MCF 10A (cell line): ENCODE measurements at regions of chr2 and their contacts with region 1.

Region 1: DNA sequence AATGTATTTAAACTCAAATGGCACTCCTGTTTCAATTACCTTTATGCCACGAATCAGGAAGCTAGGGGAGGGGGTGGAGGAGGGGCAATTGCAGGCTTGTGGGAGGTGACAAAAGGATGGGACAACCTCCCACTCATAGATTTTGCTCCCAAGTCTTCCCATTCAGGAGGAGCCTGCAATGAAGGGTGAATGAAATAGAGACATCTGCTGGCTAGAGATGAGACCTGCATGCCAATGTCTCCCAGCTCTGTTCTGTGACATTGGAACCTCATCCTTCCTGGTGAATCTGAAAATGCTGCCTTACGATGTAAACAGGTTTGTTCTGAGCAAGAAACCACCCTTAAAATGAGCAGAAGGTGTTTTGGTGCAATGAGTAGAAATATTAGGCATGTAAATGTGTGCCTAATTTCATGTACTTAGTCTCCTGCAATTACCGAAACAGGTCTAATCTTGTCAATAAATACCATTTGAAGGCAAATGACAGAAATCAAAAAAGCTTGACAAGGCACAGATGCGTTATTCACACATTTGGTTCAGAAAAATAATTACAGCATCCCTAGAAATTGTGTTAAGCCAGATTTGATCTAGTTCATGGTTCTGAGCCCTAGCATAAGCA is 2.7 kb upstream of the PID1 start:
- DNase-seq: peak; percentile 94
- H3K4me3 Mint-ChIP-seq: peak overlapping the region; percentile 57
- H3K27ac Mint-ChIP-seq: peak overlapping the region; percentile 41
- H3K4me1 Mint-ChIP-seq: peaks cover 40% of the 10 kb centered on the region
- H3K27me3 Mint-ChIP-seq: no peaks in the 10 kb centered on the region
- CTCF ChIP-seq: peak; percentile 66

Region 2: DNA sequence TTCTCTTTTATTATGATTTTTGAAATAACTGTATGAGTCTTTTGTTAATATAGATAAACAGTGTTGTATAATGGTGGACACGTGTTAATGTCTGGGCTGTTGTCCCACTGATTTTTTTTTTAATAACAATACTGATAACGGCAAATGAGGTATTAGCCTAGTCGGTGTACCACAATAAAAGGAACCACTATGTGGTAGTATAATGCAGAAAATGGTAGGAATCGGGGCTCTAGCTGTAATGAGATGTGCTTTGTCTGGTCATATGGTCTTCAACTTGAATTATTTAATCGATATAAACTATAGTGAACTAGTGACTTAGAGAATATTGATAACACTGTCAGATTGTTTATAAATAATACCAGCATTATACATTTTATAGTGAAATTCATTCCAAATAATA is 574.4 kb before region 1 on chr2:
- CTCF ChIA-PET with region 1: interaction called, 3 read pairs
- POLR2A ChIA-PET with region 1: no interaction called
- intact Hi-C with region 1: loop called (anchors 1 kb)
- DNase-seq: peak; percentile 59
- H3K4me3 Mint-ChIP-seq: no peak overlapping the region
- H3K27ac Mint-ChIP-seq: no peak overlapping the region
- H3K4me1 Mint-ChIP-seq: peaks cover 10% of the 10 kb centered on the region
- H3K27me3 Mint-ChIP-seq: no peaks in the 10 kb centered on the region
- CTCF ChIP-seq: peak; percentile 51

Region 3: DNA sequence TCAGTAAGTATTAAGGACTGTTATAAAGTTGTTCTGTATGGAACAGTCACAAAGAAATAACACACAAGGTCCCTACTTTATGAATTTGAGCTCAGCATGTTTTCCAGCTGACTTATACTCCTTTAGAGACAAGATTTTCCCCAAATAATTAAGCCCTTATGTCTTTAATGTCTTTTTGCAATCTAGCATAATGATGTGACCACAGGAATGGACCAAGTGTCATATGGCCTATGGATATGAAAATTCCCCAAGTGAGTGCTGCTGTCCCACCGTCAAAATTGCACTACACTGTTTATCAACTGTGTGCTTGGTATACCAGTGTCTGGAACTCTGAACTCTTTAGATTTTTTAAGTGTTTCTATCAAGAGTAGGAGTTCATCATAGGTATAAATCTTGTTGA is 372.3 kb before region 1 on chr2:
- CTCF ChIA-PET with region 1: no interaction called
- POLR2A ChIA-PET with region 1: no interaction called
- intact Hi-C with region 1: no loop called
- DNase-seq: no peak
- H3K4me3 Mint-ChIP-seq: no peak overlapping the region
- H3K27ac Mint-ChIP-seq: no peak overlapping the region
- H3K4me1 Mint-ChIP-seq: no peaks in the 10 kb centered on the region
- H3K27me3 Mint-ChIP-seq: no peaks in the 10 kb centered on the region
- CTCF ChIP-seq: no peak

Region 4: DNA sequence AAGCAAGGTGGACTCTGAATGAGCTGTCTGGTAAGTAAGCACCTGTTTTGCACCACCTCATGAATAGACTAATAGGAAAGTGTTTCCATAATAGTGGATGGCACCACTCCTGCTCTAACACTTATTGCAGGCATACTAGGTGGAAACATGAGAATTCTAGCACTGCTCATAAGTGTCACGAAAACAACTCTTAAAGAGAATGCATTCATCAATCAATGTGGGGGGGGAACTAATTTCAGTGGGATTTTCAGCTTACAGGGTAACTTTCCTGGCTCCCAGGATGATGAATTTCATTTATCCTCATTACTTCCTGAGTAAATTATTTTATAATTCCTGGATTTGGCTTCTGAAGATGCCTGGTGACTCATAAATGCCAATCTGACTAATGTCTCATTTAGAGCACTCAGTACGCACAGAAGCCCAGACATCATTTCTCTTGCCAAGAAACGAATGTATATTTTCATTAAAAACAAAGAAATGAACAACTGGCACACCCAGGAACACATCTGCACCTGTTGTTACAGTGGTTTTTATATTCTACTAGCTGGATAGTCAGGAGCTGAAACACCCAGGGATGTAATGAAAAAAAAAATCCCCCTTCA is 132.3 kb before region 1 on chr2:
- CTCF ChIA-PET with region 1: interaction called, 248 read pairs
- POLR2A ChIA-PET with region 1: interaction called, 18 read pairs
- intact Hi-C with region 1: no loop called
- DNase-seq: peak; percentile 86
- H3K4me3 Mint-ChIP-seq: no peak overlapping the region
- H3K27ac Mint-ChIP-seq: peak overlapping the region; percentile 49
- H3K4me1 Mint-ChIP-seq: peaks cover 30% of the 10 kb centered on the region
- H3K27me3 Mint-ChIP-seq: no peaks in the 10 kb centered on the region
- CTCF ChIP-seq: no peak

Region 5: DNA sequence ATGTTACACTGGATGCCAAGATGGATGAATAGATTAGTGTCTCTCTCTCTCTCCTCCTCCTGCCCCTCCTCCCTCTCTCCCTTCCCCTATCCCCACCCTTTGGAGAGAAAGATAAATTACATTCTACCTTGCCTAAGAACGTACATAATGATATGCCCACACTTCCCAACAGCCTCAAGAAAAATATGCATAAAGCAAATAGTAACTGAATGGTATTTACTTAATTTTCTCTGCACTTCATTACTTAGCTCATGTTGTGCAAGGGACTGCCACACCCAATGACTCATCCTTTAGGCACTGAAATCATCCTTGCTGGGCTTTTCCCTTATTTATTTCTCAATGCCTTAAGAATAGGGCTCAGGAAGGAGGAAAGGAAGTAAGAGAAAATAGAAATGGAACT is 134.5 kb after region 1 on chr2:
- CTCF ChIA-PET with region 1: interaction called, 3 read pairs
- POLR2A ChIA-PET with region 1: interaction called, 15 read pairs
- intact Hi-C with region 1: loop called (anchors 5 kb)
- DNase-seq: peak; percentile 97
- H3K4me3 Mint-ChIP-seq: peak overlapping the region; percentile 48
- H3K27ac Mint-ChIP-seq: peak overlapping the region; percentile 99
- H3K4me1 Mint-ChIP-seq: peaks cover 57% of the 10 kb centered on the region
- H3K27me3 Mint-ChIP-seq: no peaks in the 10 kb centered on the region
- CTCF ChIP-seq: no peak

Region 6: DNA sequence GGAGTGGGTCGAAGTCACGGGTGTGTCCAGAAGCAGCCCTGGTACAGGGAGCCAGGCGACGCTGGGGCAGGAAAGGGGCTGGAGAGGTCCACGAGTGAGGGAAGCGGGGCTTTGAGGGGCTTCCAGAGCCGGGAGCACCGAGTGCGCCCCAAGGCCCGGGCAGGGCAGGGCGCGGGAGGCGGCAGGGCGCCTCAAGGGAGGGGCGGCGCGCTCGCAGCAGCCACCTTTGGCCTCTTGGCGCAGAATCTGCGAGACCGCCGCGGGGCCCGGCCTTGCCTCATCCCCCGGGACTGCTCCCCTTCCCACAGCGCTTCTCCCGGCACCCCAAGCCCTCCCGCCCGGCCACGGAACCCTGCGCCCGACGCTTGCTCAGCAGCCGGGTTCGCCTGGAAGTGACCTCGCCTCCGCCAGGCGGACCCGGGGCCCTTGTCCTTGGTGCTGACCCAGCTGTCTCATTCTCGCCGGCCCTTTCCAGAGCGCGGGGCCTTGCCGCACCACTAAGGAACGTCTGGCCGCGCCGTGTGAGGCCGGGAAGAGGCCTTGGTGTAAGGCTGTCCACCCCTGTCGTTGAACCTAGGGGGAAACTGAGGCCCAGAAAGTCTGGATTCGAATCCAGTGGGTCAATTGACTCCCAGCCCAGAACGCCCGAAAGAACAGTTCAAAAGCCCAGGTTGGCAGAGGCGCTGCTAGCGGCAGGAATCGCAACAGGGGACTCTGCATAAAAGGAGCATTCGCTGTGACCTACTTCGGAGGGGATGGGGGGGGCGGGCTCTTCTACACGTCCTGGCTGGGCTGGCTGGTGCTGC is 441.1 kb after region 1 on chr2:
- CTCF ChIA-PET with region 1: interaction called, 3 read pairs
- POLR2A ChIA-PET with region 1: no interaction called
- intact Hi-C with region 1: loop called (anchors 2 kb)
- DNase-seq: peak; percentile 74
- H3K4me3 Mint-ChIP-seq: peak overlapping the region; percentile 70
- H3K27ac Mint-ChIP-seq: no peak overlapping the region
- H3K4me1 Mint-ChIP-seq: peaks cover 10% of the 10 kb centered on the region
- H3K27me3 Mint-ChIP-seq: peaks cover 59% of the 10 kb centered on the region
- CTCF ChIP-seq: no peak